ENCODE measurements at regions of chr2 and their contacts with region 1.

Region 1: GRCh38 chr2:203814661-203815540 is 52.7 kb upstream of the CTLA4 start:
- DNase-seq: peak; percentile 76
- H3K4me3 ChIP-seq: no peak overlapping the region
- H3K27ac ChIP-seq: no peak overlapping the region
- H3K4me1 ChIP-seq: no peaks in the 10 kb centered on the region
- H3K27me3 ChIP-seq: no peaks in the 10 kb centered on the region
- CTCF ChIP-seq: peak; percentile 66

Region 2: GRCh38 chr2:202831242-202832220 is 983.4 kb before region 1 on chr2:
- CTCF ChIA-PET with region 1: no interaction called
- POLR2A ChIA-PET with region 1: no interaction called
- intact Hi-C with region 1: loop called (anchors 5 kb)
- DNase-seq: peak; percentile 84
- H3K4me3 ChIP-seq: no peak overlapping the region
- H3K27ac ChIP-seq: no peak overlapping the region
- H3K4me1 ChIP-seq: no peaks in the 10 kb centered on the region
- H3K27me3 ChIP-seq: no peaks in the 10 kb centered on the region
- CTCF ChIP-seq: peak; percentile 81

Region 3: DNA sequence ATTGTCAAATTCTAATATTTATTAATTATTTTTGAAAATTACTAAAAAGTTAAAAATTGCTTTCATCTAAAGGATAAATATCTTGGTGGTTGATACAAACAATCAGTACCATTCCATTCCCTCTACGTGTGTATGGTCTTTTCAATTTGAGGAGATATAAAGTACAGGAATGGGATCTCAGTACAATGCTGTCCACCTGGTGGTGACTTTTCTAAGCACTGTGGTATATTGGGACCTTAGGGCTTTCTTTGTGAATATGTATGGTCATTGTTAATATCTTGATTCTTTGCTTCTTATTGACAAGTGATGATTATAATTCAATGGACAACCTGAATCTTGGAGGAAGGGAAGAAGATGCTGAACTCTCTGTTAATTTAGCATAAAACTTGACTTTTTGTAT is 717.2 kb before region 1 on chr2:
- CTCF ChIA-PET with region 1: no interaction called
- POLR2A ChIA-PET with region 1: interaction called, 12 read pairs
- intact Hi-C with region 1: no loop called
- DNase-seq: peak; percentile 12
- H3K4me3 ChIP-seq: no peak overlapping the region
- H3K27ac ChIP-seq: no peak overlapping the region
- H3K4me1 ChIP-seq: no peaks in the 10 kb centered on the region
- H3K27me3 ChIP-seq: no peaks in the 10 kb centered on the region
- CTCF ChIP-seq: peak; percentile 35; the same call in 1 of the 2 replicates

Region 4: DNA sequence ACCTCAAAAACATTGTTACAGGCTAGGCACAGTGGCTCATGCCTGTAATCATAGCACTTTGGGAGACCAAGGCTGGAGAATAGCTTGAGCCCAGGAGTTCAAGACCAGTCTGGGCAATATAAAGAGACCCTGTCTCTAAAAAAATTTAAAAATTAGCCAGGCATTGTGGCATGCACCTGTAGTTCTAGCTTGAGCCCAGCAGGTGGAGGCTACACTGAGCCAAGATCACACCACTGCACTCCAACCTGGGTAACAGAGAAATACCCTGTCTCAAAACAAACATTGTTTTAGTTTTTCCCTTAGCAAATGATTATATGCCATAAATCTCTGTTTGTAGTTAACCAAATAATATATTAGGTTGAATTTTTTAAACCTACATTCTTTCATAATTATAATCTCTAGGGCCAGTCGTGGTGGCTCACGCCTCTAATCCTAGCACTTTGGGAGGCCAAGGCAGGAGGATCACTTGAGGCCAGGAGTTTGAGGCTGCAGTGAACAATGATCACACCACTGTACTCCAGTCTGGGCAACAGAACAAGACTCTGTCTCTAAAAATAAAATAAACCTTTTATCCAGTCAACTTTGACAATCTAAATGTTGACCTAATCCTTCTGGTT is 589.4 kb before region 1 on chr2:
- CTCF ChIA-PET with region 1: no interaction called
- POLR2A ChIA-PET with region 1: no interaction called
- intact Hi-C with region 1: loop called (anchors 10 kb)
- DNase-seq: peak; percentile 37
- H3K4me3 ChIP-seq: no peak overlapping the region
- H3K27ac ChIP-seq: no peak overlapping the region
- H3K4me1 ChIP-seq: no peaks in the 10 kb centered on the region
- H3K27me3 ChIP-seq: no peaks in the 10 kb centered on the region
- CTCF ChIP-seq: peak; percentile 70

Region 5: GRCh38 chr2:203484266-203485112 is 330.4 kb before region 1 on chr2:
- CTCF ChIA-PET with region 1: no interaction called
- POLR2A ChIA-PET with region 1: no interaction called
- intact Hi-C with region 1: loop called (anchors 5 kb)
- DNase-seq: peak; percentile 40
- H3K4me3 ChIP-seq: no peak overlapping the region
- H3K27ac ChIP-seq: no peak overlapping the region
- H3K4me1 ChIP-seq: no peaks in the 10 kb centered on the region
- H3K27me3 ChIP-seq: no peaks in the 10 kb centered on the region
- CTCF ChIP-seq: peak; percentile 49

Region 6: DNA sequence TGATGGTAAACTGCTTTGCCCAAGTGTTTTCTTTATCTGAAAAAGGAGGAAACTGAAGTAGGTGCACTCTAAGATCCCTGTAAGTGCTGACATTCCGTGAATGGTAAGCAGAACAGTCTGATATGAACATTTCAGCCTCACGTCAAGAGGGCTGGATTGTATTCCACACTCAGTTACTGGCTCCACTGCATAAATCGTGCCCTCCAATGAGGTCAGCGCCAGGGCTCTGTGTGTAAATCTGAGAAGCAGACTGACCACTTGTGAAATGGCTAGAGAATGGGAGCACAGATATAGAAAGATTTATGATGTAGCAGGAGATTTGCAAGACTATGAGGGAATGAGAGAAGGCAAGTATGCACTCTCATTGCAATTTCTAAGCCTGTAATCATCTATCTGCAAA is 274.7 kb after region 1 on chr2:
- CTCF ChIA-PET with region 1: no interaction called
- POLR2A ChIA-PET with region 1: no interaction called
- intact Hi-C with region 1: no loop called
- DNase-seq: no peak
- H3K4me3 ChIP-seq: no peak overlapping the region
- H3K27ac ChIP-seq: no peak overlapping the region
- H3K4me1 ChIP-seq: no peaks in the 10 kb centered on the region
- H3K27me3 ChIP-seq: no peaks in the 10 kb centered on the region
- CTCF ChIP-seq: no peak

Measured in A673 (cell line).